GM12878 (cell line): ENCODE measurements at regions of chr17 and their contacts with region 1.

Region 1: GRCh38 chr17:80876950-80877728 is 114.5 kb upstream of the CHMP6 start:
- DNase-seq: peak; percentile 99
- ATAC-seq: peak; percentile 97
- H3K4me3 ChIP-seq: 0 out of 2 replicates have a peak overlapping the region, but pooled peaks have one; percentile 9
- H3K27ac ChIP-seq: peak overlapping the region; percentile 79
- H3K4me1 ChIP-seq: peaks cover 21% of the 10 kb centered on the region
- H3K27me3 ChIP-seq: no peaks in the 10 kb centered on the region
- CTCF ChIP-seq: no peak
- EP300 ChIP-seq: peak; percentile 81 to 85
- POLR2A ChIP-seq: peak; percentile 25; the same call in 1 of the 2 replicates
- RAD21 ChIP-seq: no peak

Region 2: DNA sequence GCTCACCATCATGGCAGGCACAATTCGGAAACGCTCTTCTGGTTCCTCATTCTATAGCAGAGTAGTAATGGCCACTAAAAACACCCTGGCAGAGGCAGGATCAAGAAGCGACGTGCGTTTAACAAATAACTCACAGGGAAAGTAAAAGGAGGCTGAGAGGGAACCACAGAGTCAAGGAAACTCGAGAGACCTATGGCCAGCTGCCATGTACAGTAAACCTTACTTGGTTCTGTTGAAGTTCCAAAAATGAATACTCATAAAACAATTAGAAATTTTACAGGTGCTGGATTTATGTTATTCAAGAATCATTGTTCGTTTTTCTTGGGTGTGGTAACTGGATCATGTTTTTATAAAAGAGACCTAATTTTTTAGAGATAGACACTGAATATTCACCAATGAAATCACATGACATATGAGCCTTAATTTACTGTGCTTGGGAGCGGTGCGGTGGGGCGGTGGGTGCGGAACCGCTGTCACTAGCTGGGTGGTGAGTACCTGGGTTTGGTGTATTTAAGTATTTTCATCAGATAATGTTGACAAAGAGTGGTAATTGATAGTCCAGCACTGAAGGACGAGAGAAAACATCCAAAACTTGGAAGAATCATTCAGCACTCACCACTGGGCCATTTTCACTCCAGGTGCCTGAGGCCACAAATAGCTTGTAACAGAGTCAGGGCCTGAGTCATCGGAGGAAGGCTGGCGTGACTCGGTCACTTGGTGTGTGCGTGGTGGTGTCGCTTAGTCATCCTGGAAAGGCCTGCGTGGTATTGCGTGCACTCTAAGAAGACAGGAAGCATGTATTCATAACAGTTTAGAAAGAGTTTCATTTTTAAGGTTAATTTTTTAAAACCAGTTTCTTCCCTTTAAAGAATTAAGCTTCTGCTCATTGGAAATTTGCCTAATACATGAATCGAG is 20.9 kb before region 1 on chr17:
- CTCF ChIA-PET with region 1: no interaction called
- POLR2A ChIA-PET with region 1: no interaction called
- RAD21 ChIA-PET with region 1: interaction called, 4 read pairs
- SMC1A ChIA-PET with region 1: interaction called, 3 read pairs
- in situ Hi-C with region 1: no loop called
- intact Hi-C with region 1: loop called (anchors 1 kb)
- DNase-seq: peak; percentile 77
- ATAC-seq: peak; percentile 98
- H3K4me3 ChIP-seq: no peak overlapping the region
- H3K27ac ChIP-seq: peak overlapping the region; percentile 96
- H3K4me1 ChIP-seq: peaks cover 26% of the 10 kb centered on the region
- H3K27me3 ChIP-seq: no peaks in the 10 kb centered on the region
- CTCF ChIP-seq: no peak
- EP300 ChIP-seq: peak; percentile 98 to 99
- POLR2A ChIP-seq: no peak; the same call in 1 of the 2 replicates
- RAD21 ChIP-seq: peak; percentile 27; the same call in 1 of the 2 replicates

Region 3: GRCh38 chr17:80892019-80892855 is 15.1 kb after region 1 on chr17:
- CTCF ChIA-PET with region 1: interaction called, 3 read pairs
- POLR2A ChIA-PET with region 1: interaction called, 4 read pairs
- RAD21 ChIA-PET with region 1: interaction called, 3 read pairs
- SMC1A ChIA-PET with region 1: interaction called, 6 read pairs
- in situ Hi-C with region 1: no loop called
- intact Hi-C with region 1: loop called (anchors 1 kb)
- DNase-seq: peak; percentile 77
- ATAC-seq: peak; percentile 96
- H3K4me3 ChIP-seq: 0 out of 2 replicates have a peak overlapping the region, but pooled peaks have one; percentile 22
- H3K27ac ChIP-seq: peak overlapping the region; percentile 78
- H3K4me1 ChIP-seq: peaks cover 30% of the 10 kb centered on the region
- H3K27me3 ChIP-seq: no peaks in the 10 kb centered on the region
- CTCF ChIP-seq: no peak
- EP300 ChIP-seq: peak; percentile 34 to 43; a peak in 2 of 4 replicates
- POLR2A ChIP-seq: peak; percentile 49; the same call in 1 of the 2 replicates
- RAD21 ChIP-seq: no peak

Region 4: GRCh38 chr17:80899402-80900268 is 22.5 kb after region 1 on chr17:
- CTCF ChIA-PET with region 1: interaction called, 15 read pairs
- POLR2A ChIA-PET with region 1: interaction called, 3 read pairs
- RAD21 ChIA-PET with region 1: interaction called, 3 read pairs
- SMC1A ChIA-PET with region 1: interaction called, 4 read pairs
- in situ Hi-C with region 1: no loop called
- intact Hi-C with region 1: loop called (anchors 1 kb)
- DNase-seq: no peak
- ATAC-seq: peak; percentile 45
- H3K4me3 ChIP-seq: no peak overlapping the region
- H3K27ac ChIP-seq: no peak overlapping the region
- H3K4me1 ChIP-seq: peaks cover 25% of the 10 kb centered on the region
- H3K27me3 ChIP-seq: no peaks in the 10 kb centered on the region
- CTCF ChIP-seq: peak; percentile 40 to 68 (median 48)
- EP300 ChIP-seq: no peak
- POLR2A ChIP-seq: no peak
- RAD21 ChIP-seq: peak; percentile 68

Region 5: GRCh38 chr17:80908776-80909175 is 31.6 kb after region 1 on chr17:
- CTCF ChIA-PET with region 1: interaction called, 10 read pairs
- POLR2A ChIA-PET with region 1: interaction called, 12 read pairs
- RAD21 ChIA-PET with region 1: interaction called, 11 read pairs
- SMC1A ChIA-PET with region 1: interaction called, 22 read pairs
- in situ Hi-C with region 1: no loop called
- intact Hi-C with region 1: loop called (anchors 1 kb)
- DNase-seq: no peak
- ATAC-seq: no peak
- H3K4me3 ChIP-seq: no peak overlapping the region
- H3K27ac ChIP-seq: peak overlapping the region; percentile 87
- H3K4me1 ChIP-seq: peaks cover 40% of the 10 kb centered on the region
- H3K27me3 ChIP-seq: no peaks in the 10 kb centered on the region
- CTCF ChIP-seq: no peak
- EP300 ChIP-seq: no peak
- POLR2A ChIP-seq: no peak
- RAD21 ChIP-seq: no peak

Region 6: GRCh38 chr17:80927791-80928216 is 50.7 kb after region 1 on chr17:
- CTCF ChIA-PET with region 1: interaction called, 7 read pairs
- POLR2A ChIA-PET with region 1: interaction called, 3 read pairs
- RAD21 ChIA-PET with region 1: interaction called, 4 read pairs
- SMC1A ChIA-PET with region 1: interaction called, 6 read pairs
- in situ Hi-C with region 1: no loop called
- intact Hi-C with region 1: loop called (anchors 1 kb)
- DNase-seq: no peak
- ATAC-seq: no peak
- H3K4me3 ChIP-seq: no peak overlapping the region
- H3K27ac ChIP-seq: no peak overlapping the region
- H3K4me1 ChIP-seq: peaks cover 7% of the 10 kb centered on the region
- H3K27me3 ChIP-seq: no peaks in the 10 kb centered on the region
- CTCF ChIP-seq: no peak
- EP300 ChIP-seq: no peak
- POLR2A ChIP-seq: no peak
- RAD21 ChIP-seq: no peak

Region 7: DNA sequence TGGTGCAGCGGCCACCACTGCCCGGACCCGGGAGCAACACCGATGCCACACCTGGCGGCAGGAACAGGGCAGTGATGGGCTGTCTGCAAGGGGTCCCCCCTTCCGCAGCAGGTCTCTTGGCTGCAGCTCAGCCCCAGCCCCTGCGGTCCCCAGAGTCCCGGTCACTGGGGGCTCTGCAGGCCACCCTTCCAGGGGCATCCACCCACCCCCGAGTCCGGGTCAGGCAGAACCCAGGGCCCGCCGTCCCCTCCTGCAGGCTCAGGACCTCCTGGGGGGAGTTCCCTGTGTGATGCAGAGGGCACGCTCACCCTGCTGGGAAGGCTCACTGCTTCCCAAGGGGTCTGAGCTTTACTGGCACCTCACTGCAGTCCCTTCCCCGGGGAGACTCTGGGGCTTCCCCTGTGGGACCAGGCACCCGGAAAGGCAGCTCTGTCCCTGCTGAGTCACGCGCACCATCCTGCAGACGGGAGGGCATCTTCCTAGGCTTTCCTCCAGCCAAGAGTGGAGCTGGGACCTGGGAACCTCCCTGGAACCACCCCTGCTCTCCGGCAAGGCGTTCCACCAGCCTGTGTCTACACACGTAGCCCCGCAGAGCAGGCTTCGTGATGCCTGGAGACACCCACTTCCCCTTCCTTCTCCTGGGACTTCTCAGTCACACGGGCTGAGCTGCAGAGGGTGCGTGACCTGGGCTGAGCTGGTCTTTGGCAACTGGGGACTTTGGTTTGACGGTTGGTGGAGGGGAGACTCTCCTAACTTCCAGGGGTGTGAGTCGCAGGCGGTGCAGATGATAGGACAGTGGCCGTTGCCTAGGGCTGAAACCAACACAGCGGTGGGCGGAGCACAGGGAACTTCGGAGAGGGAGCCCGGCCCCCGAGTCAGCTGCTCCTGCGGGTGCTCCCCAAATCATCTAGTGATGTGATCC is 858.3 kb after region 1 on chr17:
- CTCF ChIA-PET with region 1: no interaction called
- POLR2A ChIA-PET with region 1: no interaction called
- RAD21 ChIA-PET with region 1: no interaction called
- SMC1A ChIA-PET with region 1: no interaction called
- in situ Hi-C with region 1: no loop called
- intact Hi-C with region 1: no loop called
- DNase-seq: peak; percentile 26
- ATAC-seq: peak; percentile 70
- H3K4me3 ChIP-seq: peak overlapping the region; percentile 55; the same call in 1 of the 2 replicates
- H3K27ac ChIP-seq: no peak overlapping the region
- H3K4me1 ChIP-seq: peaks cover 4% of the 10 kb centered on the region; the same call in 1 of the 2 replicates
- H3K27me3 ChIP-seq: peaks cover 0 to 2% of the 10 kb centered on the region in 2 experiments; a peak in 1 of 4 replicates
- CTCF ChIP-seq: no peak
- EP300 ChIP-seq: peak in 1 of 2 experiments; percentile 10; a peak in 1 of 4 replicates
- POLR2A ChIP-seq: no peak
- RAD21 ChIP-seq: no peak